Vagina (tissue), 2 donors: ENCODE measurements at regions of chr11 and their contacts with region 1.

Region 1: GRCh38 chr11:62787005-62787759 is at the start of gene TMEM179B:
- DNase-seq: peak in 1 of 2 donors; percentile 96
- H3K4me3 ChIP-seq: peak within 1 kb of the TSS; percentile 87 to 95
- H3K27ac ChIP-seq: peak within 1 kb of the TSS; percentile 99
- H3K4me1 ChIP-seq: peaks cover 51% of the 10 kb centered on the region
- H3K27me3 ChIP-seq: no peaks in the 10 kb centered on the region
- CTCF ChIP-seq: peak; percentile 13 to 44 (median 44)
- POLR2A ChIP-seq: peak in 1 of 2 donors; percentile 63
- total RNA-seq, gene TMEM179B: 61.9 TPM

Region 2: DNA sequence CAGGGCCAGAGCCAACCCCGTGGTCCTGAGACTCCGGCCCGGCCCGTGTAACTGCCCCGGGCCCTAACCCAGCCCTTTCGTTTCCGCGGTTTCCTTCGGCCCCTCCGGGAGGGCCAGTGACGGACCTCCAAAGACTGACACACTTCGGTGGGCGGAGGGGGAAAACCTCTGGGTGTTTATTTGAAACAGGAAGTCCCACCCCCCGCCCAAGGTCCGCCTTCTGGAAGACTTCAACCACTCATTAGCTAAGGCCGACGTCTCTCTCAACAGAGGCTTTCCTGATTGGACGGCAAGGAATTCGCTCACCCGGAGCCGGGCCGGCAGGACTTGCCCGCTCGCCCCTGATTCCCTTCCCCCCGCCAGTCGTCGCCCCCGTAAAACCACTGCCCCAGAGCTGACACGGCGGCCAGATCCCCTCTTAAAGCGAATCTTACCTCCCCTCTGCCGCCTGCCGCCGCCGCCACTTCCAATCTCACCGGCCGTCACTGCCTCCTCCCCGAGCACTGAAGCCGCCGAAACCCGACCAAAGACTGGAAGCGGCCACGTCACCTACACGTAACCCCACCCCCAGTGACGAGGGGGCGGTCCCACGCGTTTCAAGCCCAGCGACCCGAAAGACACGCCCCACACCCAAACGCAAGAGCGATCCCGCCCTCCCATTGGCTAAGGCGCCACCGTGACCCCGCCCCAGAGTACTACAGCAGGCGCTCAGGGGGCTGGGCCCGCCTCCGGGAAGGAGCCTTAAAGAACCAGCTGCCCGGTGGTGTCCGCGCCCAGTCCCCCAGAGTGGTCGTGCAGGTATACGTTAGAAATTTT is 44.5 kb after region 1 on chr11 and contains the start of gene STX5:
- intact Hi-C with region 1: loop called (anchors 10 kb)
- DNase-seq: peak; percentile 99
- H3K4me3 ChIP-seq: peak within 1 kb of the TSS; percentile 96 to 99
- H3K27ac ChIP-seq: peak within 1 kb of the TSS; percentile 94
- H3K4me1 ChIP-seq: peaks cover 55% of the 10 kb centered on the region
- H3K27me3 ChIP-seq: no peaks in the 10 kb centered on the region
- CTCF ChIP-seq: no peak
- POLR2A ChIP-seq: peak; percentile 44 to 66
- total RNA-seq, gene STX5: 35.6 TPM

Region 3: GRCh38 chr11:62860835-62861563 is 73.8 kb after region 1 on chr11:
- intact Hi-C with region 1: loop called (anchors 5 kb)
- DNase-seq: no peak
- H3K4me3 ChIP-seq: no peak overlapping the region
- H3K27ac ChIP-seq: no peak overlapping the region
- H3K4me1 ChIP-seq: peaks cover 19% of the 10 kb centered on the region
- H3K27me3 ChIP-seq: no peaks in the 10 kb centered on the region
- CTCF ChIP-seq: no peak
- POLR2A ChIP-seq: no peak